Left cardiac atrium (tissue), 4 donors: ENCODE measurements at regions of chr3 and their contacts with region 1.

Region 1: DNA sequence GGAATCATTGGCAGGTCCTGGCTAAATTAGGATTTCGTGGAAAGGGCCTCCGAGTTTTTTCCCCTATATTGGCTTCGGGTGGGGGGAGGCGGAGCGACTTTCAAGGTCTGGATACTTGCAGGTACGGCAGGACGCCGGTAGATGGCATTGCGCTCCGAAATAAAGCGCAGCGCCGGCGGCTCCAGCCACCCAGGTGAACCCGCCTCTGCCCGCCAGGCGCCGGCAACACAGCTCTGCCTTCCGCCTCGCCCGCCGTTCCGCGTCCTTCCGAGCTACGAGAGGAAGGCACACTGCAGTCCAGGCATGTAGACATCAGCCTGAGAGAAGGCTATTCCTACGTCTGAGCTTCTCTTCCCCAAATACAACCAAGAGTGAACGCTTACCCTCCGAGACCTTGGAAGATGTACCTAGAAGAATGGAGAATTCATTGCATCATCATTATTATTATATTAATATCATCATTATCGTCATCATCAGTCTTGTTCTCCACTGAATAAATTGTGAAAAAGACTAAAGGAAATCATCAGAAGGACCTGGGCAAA is 514.1 kb downstream of the MECOM start:
- DNase-seq: peak; percentile 90
- ATAC-seq: peak; percentile 84 to 88

Region 2: DNA sequence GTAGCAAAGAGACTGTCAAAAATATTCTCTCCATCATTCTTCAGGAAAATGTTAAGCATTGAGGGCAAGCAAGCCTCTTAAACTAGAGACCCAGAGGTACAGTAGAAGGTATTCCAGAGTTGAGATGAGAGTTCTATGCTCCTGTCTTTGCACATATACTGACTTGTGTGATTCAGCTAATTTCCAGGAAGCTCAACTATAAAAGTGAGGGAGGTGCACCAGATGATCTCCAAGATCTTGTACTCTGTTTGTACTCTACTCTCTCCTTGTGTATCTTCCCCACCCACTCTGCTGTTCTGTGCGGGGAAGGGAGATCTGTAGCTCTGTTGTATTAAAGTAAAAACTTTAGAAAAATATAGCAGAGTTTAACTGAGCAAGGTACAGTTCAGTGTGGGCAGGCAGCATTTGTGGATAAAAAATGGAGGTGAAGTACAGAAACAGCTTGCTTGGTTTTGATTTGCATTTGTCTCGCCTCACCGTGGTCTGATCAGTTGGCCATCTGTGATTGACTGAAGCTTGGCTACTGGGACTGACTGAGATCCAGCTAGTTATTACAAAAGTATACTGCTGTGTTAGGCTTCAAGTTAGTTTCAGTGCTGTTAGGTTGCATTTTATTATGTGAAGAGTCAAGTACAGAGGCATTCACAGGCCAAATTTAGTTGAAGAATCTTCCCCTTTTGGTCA is 590.5 kb before region 1 on chr3:
- intact Hi-C with region 1: no loop called
- DNase-seq: no peak
- ATAC-seq: no peak

Region 3: DNA sequence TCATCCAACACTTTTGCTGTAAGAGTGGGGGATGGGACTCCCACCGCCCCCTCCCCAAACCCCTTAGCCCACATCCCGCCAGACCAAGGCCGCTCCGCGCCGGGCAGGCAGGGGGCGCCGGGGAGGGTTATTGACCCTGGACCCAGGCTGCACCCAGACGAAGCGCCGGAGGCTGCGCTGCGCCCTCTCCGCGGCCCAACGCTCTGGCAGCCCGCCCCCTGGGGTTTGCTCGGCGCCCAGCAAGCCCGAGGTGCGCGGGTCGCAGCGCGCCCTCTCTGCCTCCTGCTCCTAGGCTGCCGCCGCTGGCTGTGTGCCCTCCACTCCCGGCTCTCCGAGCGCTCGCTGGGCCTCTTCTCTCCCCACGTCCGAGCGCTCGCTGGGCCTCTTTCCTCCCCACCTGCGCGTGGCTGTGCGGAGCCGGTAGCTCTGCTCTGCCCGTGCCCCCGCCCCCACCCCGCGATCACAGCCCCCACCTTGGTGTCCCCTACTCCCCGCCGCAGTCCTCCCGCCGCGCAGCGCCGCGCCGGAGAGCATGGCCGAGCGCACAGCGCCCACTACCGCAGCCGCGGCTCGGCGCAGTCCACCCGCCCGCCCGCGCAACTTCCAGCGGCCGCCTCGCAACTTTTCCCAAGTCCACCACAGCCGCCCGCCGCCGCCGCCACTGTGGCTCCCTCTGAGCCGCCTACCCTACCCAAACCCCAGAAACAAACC is 512.9 kb after region 1 on chr3:
- intact Hi-C with region 1: loop called (anchors 2 to 5 kb)
- DNase-seq: peak; percentile 82
- ATAC-seq: peak; percentile 87 to 88

Region 4: DNA sequence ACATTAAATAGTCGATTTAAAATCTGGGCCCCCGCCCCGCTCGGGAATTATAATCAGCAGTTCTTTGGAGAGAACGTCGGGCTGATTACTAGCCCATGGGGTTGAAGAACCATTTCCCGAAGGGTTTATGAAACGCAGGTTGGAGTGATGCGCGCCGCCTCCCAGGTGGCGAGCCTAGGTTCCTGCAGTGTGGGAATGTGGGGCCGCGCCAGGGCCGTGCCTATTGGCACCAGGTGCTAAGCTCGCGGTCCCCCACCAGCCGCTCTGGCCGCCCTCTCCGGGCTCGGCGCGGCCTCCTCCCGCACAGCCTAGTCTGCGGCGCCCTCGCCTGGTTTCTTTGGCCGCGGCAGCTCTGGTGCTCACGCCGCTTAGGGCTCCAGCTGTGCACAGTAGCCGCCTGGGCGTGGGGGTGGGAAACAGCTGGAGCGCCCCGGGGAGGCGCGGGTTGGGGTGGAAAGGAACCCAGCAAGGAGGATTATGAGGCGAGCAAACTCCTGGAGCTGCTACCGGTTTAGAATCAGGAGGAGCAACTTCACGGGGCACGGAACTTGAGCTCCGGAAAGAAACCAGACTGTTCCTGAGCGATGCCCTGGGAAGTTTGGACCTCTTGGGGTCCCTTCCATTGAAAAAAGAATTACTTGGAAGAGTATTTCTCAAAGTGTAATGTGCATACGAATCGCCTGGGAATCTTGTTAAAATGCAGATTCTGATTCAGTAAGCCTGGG is 519.7 kb after region 1 on chr3:
- intact Hi-C with region 1: loop called (anchors 2 to 5 kb)
- DNase-seq: peak; percentile 86
- ATAC-seq: peak; percentile 97 to 98

Region 5: DNA sequence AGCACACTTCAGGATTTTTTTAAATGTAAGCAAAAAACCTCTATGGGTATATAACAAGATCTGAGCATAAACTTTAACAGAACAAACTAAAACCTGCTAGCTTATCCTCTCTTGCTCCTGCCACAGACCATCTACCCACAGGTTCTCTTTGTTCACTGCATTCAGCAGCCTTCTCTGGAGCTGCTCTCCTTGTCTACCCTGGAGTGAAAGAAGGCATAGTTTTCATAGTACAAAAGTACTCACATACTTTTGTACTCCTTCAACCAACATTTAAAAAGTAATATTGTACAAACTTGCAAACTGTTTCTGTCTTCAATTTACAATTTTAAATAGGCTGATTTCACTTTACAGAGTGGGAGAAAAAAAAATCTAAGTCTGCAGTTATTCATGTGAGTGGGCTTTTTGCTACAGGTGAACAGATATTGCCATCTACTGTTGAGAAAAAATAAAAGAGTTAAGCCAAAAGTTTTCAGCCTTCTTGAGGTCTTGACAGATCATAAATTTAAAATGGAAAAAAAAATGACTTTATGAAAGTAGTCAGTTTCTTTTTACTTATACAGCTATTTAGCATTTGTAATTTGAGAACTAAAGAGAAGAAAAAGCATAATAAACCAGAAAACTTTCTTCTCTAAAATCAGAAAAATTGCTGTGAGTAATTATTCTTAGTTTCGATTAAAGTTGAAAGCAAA is 595.1 kb after region 1 on chr3:
- intact Hi-C with region 1: loop called in 1 of 2 experiments (anchors 5 kb)
- DNase-seq: no peak
- ATAC-seq: no peak